Prostate gland (tissue), 2 donors: ENCODE measurements at regions of chr15 and their contacts with region 1.

Region 1: DNA sequence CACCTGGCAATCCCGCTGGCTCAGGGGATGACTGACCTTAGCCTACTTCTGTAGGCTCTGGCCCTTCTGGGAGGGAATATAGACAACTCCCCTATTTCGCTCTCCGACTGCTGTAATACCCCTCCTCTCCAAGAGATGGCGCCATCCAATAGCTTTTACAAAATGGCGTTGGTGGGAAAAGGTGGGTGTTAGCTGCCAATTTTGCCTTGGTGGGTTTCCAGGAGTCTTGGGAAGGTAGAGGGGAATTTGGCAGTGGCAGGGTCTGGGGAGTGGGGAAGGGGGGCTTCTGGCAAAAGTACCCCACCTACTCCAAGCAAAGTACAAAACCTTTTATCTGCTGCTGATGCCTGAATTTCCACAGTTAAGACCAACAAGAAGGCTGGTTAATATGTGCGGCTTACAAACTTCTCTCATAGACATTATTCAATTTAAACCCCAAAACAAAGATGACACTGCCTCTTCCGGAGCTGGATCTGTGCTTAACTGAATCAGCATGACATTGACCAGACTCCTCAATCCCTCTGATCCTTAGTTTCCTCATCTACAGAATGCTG is 62.1 kb downstream of the RASGRF1 start:
- DNase-seq: no peak
- H3K4me3 ChIP-seq: no peak overlapping the region
- H3K27ac ChIP-seq: no peak overlapping the region
- H3K4me1 ChIP-seq: no peaks in the 10 kb centered on the region
- H3K27me3 ChIP-seq: no peaks in the 10 kb centered on the region
- CTCF ChIP-seq: peak; percentile 60 to 78 (median 73)
- POLR2A ChIP-seq: no peak

Region 2: DNA sequence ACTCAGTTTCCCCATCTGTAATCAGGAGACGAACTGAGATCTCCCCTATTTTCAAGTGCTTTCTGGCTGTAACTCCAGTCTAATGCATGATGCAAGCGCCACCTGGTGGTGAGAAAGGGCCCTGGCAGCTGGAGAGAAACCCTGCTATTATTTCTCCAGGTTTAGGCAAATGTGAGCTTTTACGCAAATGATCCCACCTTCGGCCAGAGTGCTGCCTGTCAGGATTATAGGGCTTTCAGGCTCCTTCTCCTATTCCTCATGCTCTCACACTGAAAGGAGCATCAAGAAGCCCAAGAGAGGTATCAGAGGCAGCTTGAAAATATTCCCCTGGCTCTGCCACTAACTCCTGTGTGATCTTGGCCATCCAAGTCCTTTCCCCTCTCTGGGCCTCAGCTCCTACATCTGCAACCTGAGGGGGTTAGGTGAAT is 156.0 kb after region 1 on chr15:
- intact Hi-C with region 1: loop called (anchors 1 kb)
- DNase-seq: peak; percentile 65
- H3K4me3 ChIP-seq: no peak overlapping the region
- H3K27ac ChIP-seq: no peak overlapping the region
- H3K4me1 ChIP-seq: no peaks in the 10 kb centered on the region
- H3K27me3 ChIP-seq: no peaks in the 10 kb centered on the region
- CTCF ChIP-seq: peak; percentile 92 to 99 (median 94)
- POLR2A ChIP-seq: no peak